ENCODE measurements at regions of chr12 and their contacts with region 1.

Region 1: GRCh38 chr12:104215638-104216297 is at the start of gene TXNRD1:
- DNase-seq: peak; percentile 89
- ATAC-seq: peak; percentile 91
- H3K4me3 Mint-ChIP-seq: peak within 1 kb of the TSS; percentile 71
- H3K27ac Mint-ChIP-seq: peak within 1 kb of the TSS; percentile 28
- H3K4me1 Mint-ChIP-seq: peaks cover 35% of the 10 kb centered on the region
- H3K27me3 Mint-ChIP-seq: peaks cover 11% of the 10 kb centered on the region
- total RNA-seq, gene TXNRD1: 109 to 118 TPM

Region 2: DNA sequence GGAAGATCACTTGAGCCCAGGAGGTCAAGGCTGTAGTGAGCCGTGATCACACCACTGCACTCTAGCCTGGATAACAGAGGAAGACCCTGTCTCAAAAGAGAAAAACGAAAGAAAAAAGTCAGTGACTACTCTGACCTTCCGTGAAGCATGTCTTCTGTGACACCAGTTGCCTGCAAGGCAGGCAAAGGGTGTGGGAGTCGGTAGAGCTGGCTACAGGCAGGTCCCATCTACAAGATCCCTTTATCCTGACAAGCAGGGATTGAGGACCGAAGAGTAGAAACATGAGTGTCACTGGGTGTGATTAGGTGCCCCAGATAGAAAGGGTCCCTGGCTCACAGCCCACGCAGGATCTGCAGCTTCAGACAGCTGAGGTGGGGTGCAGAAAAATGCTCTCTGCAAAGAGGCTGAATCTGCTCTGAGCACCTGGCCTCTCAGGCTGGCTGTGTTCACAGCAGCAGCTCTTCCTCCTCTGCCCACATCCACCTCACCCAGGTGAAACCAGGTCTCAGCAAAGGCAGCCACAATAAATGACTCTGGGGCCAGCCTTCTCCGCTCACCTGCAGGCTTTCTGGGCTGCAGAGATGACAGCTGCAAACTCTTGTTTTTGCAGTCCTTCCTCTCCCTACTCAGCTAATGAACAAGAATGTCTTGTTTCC is 314.1 kb before region 1 on chr12:
- CTCF ChIA-PET with region 1: no interaction called
- DNase-seq: peak; percentile 44
- ATAC-seq: peak; percentile 60
- H3K4me3 Mint-ChIP-seq: peak overlapping the region; percentile 18
- H3K27ac Mint-ChIP-seq: peak overlapping the region; percentile 41
- H3K4me1 Mint-ChIP-seq: peaks cover 20% of the 10 kb centered on the region
- H3K27me3 Mint-ChIP-seq: no peaks in the 10 kb centered on the region

Region 3: GRCh38 chr12:104291867-104292524 is 76.2 kb after region 1 on chr12:
- CTCF ChIA-PET with region 1: interaction called, 47 read pairs
- DNase-seq: no peak
- ATAC-seq: no peak
- H3K4me3 Mint-ChIP-seq: no peak overlapping the region
- H3K27ac Mint-ChIP-seq: no peak overlapping the region
- H3K4me1 Mint-ChIP-seq: peaks cover 40% of the 10 kb centered on the region
- H3K27me3 Mint-ChIP-seq: no peaks in the 10 kb centered on the region

Measured in activated CD8-positive, alpha-beta memory T cell treated with anti-CD3 and anti-CD28 coated beads, Interleukin-2, amount 10 ng/mL, durations not matched to agents 7 days and 5 days (primary cell).